PC-3 (cell line): ENCODE measurements at regions of chr7 and their contacts with region 1.

Region 1: GRCh38 chr7:130896898-130897514 is 163.0 kb upstream of the KLF14 start:
- DNase-seq: peak; percentile 71
- ATAC-seq: peak; percentile 7
- H3K4me3 ChIP-seq: no peak overlapping the region
- H3K27ac ChIP-seq: peak overlapping the region; percentile 92
- H3K4me1 ChIP-seq: peaks cover 94% of the 10 kb centered on the region
- H3K27me3 ChIP-seq: no peaks in the 10 kb centered on the region
- CTCF ChIP-seq: peak; percentile 74

Region 2: GRCh38 chr7:130853503-130854279 is 43.3 kb before region 1 on chr7:
- CTCF ChIA-PET with region 1: no interaction called
- POLR2A ChIA-PET with region 1: no interaction called
- intact Hi-C with region 1: loop called (anchors 2 kb)
- DNase-seq: peak; percentile 96
- ATAC-seq: peak; percentile 86
- H3K4me3 ChIP-seq: peak overlapping the region; percentile 36; the same call in 1 of the 2 replicates
- H3K27ac ChIP-seq: peak overlapping the region; percentile 86
- H3K4me1 ChIP-seq: peaks cover 34% of the 10 kb centered on the region
- H3K27me3 ChIP-seq: no peaks in the 10 kb centered on the region
- CTCF ChIP-seq: peak; percentile 47; the same call in 1 of the 2 replicates

Region 3: GRCh38 chr7:130941322-130942210 is 44.6 kb after region 1 on chr7:
- CTCF ChIA-PET with region 1: interaction called, 12 read pairs
- POLR2A ChIA-PET with region 1: interaction called, 18 read pairs
- intact Hi-C with region 1: loop called (anchors 2 kb)
- DNase-seq: peak; percentile 63
- ATAC-seq: peak; percentile 54
- H3K4me3 ChIP-seq: peak overlapping the region; percentile 80
- H3K27ac ChIP-seq: peak overlapping the region; percentile 87
- H3K4me1 ChIP-seq: peaks cover 63% of the 10 kb centered on the region
- H3K27me3 ChIP-seq: no peaks in the 10 kb centered on the region
- CTCF ChIP-seq: no peak

Region 4: DNA sequence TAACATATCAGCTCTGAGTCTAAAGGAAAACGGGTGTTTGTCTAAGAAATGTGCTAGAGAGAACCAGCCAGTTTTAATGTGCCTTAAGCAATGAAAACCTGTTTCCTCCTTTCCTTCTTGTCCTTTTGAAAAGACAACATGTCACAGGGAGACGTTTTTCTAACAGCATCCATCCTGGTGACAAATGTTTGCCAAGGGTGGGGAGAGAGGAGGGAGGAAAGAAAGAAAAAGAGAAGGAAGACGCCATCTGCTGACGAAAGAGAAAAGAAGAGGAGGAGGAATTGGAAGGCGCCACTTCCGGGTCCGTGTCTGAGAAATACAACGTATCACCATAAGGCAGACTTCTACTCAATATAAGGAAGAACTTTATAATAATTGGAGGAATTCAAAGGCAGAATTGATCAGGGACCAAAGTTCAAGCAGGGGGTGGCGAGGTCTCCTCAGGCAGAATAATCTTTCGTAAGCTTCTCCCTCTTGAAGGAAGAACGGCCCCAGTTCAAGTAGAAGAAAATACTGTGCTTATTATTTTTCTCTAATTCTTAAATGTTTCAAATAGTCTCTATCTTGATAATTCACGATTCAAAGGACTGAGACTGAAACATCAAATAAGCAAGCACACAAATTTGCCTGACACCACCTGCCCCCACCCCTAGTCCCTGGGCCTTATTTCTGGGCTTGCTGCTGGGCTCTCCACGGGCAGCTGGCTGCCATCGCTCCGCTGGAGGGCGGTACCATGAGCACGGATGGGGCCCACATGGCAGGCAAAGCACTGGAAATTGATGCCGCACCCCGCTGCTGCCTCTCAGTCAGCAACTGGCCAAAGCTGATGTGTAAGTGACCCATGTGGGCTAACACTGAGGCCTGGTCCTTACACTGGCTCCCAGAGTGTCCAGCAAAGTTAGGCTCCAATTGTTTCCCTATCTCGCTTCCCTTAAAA is 110.7 kb after region 1 on chr7:
- CTCF ChIA-PET with region 1: no interaction called
- POLR2A ChIA-PET with region 1: no interaction called
- intact Hi-C with region 1: loop called (anchors 2 kb)
- DNase-seq: peak; percentile 97
- ATAC-seq: peak; percentile 75
- H3K4me3 ChIP-seq: no peak overlapping the region
- H3K27ac ChIP-seq: peak overlapping the region; percentile 74
- H3K4me1 ChIP-seq: peaks cover 46% of the 10 kb centered on the region
- H3K27me3 ChIP-seq: no peaks in the 10 kb centered on the region
- CTCF ChIP-seq: peak; percentile 77